A549 (cell line): ENCODE measurements at regions of chr11 and their contacts with region 1.

Region 1: GRCh38 chr11:68257475-68258362 is 14.1 kb downstream of the C11orf24 start:
- DNase-seq: peak; percentile 84 to 92
- ATAC-seq: peak; percentile 77 to 90
- H3K4me3 ChIP-seq: no peak overlapping the region
- H3K27ac ChIP-seq: peak overlapping the region; percentile 54 to 64; a peak in 5 of 6 replicates
- H3K4me1 ChIP-seq: peaks cover 15% of the 10 kb centered on the region
- CTCF ChIP-seq: peak; percentile 88
- EP300 ChIP-seq: no peak
- POLR2A ChIP-seq: no peak
- RAD21 ChIP-seq: peak; percentile 93 to 95

Region 2: GRCh38 chr11:68127714-68128681 is 129.7 kb before region 1 on chr11:
- CTCF ChIA-PET with region 1: no interaction called
- POLR2A ChIA-PET with region 1: no interaction called
- DNase-seq: no peak
- ATAC-seq: no peak
- H3K4me3 ChIP-seq: no peak overlapping the region
- H3K27ac ChIP-seq: no peak overlapping the region
- H3K4me1 ChIP-seq: peaks cover 22% of the 10 kb centered on the region
- CTCF ChIP-seq: no peak
- EP300 ChIP-seq: no peak
- POLR2A ChIP-seq: no peak
- RAD21 ChIP-seq: no peak

Region 3: DNA sequence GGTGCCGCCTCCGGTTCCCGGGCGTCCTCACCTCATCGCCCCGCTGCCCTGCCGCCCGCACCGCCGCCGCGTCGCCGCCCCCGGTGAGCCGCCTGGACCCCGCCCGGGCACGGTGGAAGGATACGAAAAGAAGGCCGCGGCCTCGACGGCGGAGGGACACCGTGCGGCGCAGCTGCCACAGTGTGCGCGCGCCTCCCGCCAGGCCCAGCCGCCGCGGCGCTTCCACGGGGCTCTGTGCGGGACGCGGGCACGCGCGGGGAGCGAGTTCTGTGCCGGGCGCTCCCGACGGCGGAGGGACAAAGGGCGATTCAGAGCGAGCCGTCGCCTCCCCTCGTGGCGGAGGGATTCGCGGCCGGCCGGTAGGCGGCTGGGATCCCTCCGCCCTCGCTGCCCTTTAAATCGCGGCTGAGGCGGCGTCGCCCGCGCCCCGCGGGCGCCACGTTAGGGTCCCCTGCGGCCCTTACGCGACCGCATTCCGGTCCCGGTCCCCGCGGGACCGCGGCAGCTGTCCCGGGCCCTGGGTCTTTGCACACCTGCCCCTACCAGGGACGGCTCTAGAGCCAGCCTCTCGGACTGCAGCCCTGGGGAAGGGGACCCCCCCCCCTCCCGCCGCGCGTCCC is 44.1 kb before region 1 on chr11:
- CTCF ChIA-PET with region 1: interaction called, 11 read pairs
- POLR2A ChIA-PET with region 1: no interaction called
- DNase-seq: peak; percentile 66 to 98
- ATAC-seq: peak; percentile 52 to 62
- H3K4me3 ChIP-seq: peak overlapping the region; percentile 91
- H3K27ac ChIP-seq: peak overlapping the region; percentile 100
- H3K4me1 ChIP-seq: peaks cover 23% of the 10 kb centered on the region
- CTCF ChIP-seq: no peak
- EP300 ChIP-seq: no peak
- POLR2A ChIP-seq: peak; percentile 98
- RAD21 ChIP-seq: no peak

Region 4: DNA sequence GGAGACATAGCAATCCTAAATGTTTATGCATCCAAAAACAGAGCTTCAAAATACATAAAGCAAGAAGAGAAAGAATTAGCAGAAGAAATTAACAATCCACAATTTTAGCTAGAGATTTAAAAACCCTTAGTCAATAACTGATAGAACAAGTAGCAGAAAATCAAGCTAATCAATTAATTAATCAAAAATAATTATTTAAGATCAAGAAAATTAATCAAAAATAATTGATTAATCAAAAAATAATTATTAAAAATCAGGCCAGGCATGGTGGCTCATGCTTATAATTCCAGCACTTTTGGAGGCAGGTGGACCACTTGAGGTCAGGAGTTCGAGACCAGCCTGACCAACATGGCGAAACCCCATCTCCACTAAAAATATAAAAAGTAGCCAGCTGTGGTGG is 15.1 kb before region 1 on chr11:
- CTCF ChIA-PET with region 1: interaction called, 13 read pairs
- POLR2A ChIA-PET with region 1: no interaction called
- DNase-seq: no peak
- ATAC-seq: no peak
- H3K4me3 ChIP-seq: no peak overlapping the region
- H3K27ac ChIP-seq: no peak overlapping the region
- H3K4me1 ChIP-seq: no peaks in the 10 kb centered on the region
- CTCF ChIP-seq: no peak
- EP300 ChIP-seq: no peak
- POLR2A ChIP-seq: no peak
- RAD21 ChIP-seq: no peak

Region 5: GRCh38 chr11:68287419-68287818 is 29.7 kb after region 1 on chr11:
- CTCF ChIA-PET with region 1: interaction called, 12 read pairs
- POLR2A ChIA-PET with region 1: no interaction called
- DNase-seq: no peak
- ATAC-seq: no peak
- H3K4me3 ChIP-seq: no peak overlapping the region
- H3K27ac ChIP-seq: no peak overlapping the region
- H3K4me1 ChIP-seq: no peaks in the 10 kb centered on the region
- CTCF ChIP-seq: no peak
- EP300 ChIP-seq: no peak
- POLR2A ChIP-seq: no peak
- RAD21 ChIP-seq: no peak

Region 6: GRCh38 chr11:68342459-68343158 is 84.9 kb after region 1 on chr11:
- CTCF ChIA-PET with region 1: interaction called, 10 read pairs
- POLR2A ChIA-PET with region 1: no interaction called
- DNase-seq: no peak
- ATAC-seq: peak; percentile 17 to 30; a peak in 4 of 6 replicates
- H3K4me3 ChIP-seq: no peak overlapping the region
- H3K27ac ChIP-seq: peak overlapping the region; percentile 67 to 83
- H3K4me1 ChIP-seq: peaks cover 62% of the 10 kb centered on the region
- CTCF ChIP-seq: no peak
- EP300 ChIP-seq: no peak
- POLR2A ChIP-seq: no peak
- RAD21 ChIP-seq: no peak

Region 7: GRCh38 chr11:68447015-68447801 is 189.5 kb after region 1 on chr11:
- CTCF ChIA-PET with region 1: interaction called, 35 read pairs
- POLR2A ChIA-PET with region 1: no interaction called
- DNase-seq: peak; percentile 75 to 82
- ATAC-seq: peak; percentile 95 to 97
- H3K4me3 ChIP-seq: no peak overlapping the region
- H3K27ac ChIP-seq: peak overlapping the region in 1 of 2 experiments; percentile 47; a peak in 2 of 6 replicates
- H3K4me1 ChIP-seq: no peaks in the 10 kb centered on the region
- CTCF ChIP-seq: peak; percentile 84
- EP300 ChIP-seq: no peak
- POLR2A ChIP-seq: no peak
- RAD21 ChIP-seq: peak; percentile 84 to 89